GM10248 (cell line): ENCODE measurements at regions of chr15 and their contacts with region 1.

Region 1: DNA sequence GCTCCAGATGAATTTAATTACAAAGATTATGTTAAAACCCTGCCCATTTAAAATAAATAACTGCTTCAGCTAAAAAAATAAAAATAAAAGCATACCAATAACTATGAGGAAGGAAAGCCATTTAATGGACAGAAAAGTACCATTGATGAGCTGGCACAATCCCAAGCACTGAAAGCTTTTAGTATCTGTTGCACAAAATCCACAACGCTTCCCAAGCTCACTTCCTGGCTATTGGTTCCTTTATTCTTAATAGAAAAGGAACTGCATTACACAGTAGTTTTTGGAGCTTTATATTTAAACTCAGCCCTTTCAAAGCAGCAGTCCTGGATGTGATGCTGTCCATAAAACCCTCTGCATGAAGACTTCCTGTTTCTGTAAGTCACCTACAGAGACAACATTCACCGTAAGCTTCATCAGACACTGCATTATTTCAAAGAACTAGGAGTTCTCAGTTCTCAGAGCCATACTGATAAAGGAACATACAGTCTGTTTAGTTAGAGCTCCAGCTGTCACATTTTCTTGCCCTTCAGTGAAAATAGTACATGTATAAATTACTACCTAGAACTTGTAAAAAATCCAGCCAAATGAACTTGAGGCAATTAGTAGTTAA is 81.5 kb downstream of the CSNK1G1 start:
- DNase-seq: peak; percentile 26
- CTCF ChIP-seq: no peak

Region 2: DNA sequence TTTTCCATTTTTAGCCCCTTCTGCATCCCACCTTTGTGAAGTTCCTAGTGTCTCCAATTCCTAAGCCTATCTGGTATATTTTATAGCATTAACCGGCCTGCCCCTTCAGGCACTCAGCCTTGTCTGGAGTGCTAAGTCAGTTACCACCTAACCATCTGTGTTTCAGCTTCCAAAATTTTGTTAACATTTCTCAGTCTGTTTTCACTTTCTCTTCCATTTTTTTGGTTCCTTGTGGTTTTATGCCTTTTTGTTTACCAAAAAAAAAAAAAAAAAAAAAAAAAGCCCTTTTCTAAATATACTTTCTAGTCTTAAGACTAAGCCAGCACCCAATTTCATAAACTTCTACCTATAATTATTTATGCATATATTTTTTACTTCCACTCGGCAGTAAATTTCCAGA is 10.9 kb before region 1 on chr15:
- CTCF ChIA-PET with region 1: interaction called, 15 read pairs
- POLR2A ChIA-PET with region 1: interaction called, 3 read pairs
- DNase-seq: peak; percentile 28
- CTCF ChIP-seq: no peak